Panc1 (cell line): ENCODE measurements at regions of chr1 and their contacts with region 1.

Region 1: GRCh38 chr1:117051224-117052064 is 8.7 kb upstream of the TTF2 start:
- DNase-seq: no peak
- ATAC-seq: peak; percentile 78
- H3K4me3 ChIP-seq: peak overlapping the region; percentile 1 to 7; a peak in 2 of 4 replicates
- H3K27ac ChIP-seq: peak overlapping the region; percentile 63
- H3K4me1 ChIP-seq: no peaks in the 10 kb centered on the region
- H3K27me3 ChIP-seq: no peaks in the 10 kb centered on the region
- CTCF ChIP-seq: no peak

Region 2: GRCh38 chr1:116855191-116855619 is 196.2 kb before region 1 on chr1:
- CTCF ChIA-PET with region 1: interaction called, 7 read pairs
- POLR2A ChIA-PET with region 1: no interaction called
- in situ Hi-C with region 1: no loop called
- intact Hi-C with region 1: loop called (anchors 5 kb)
- DNase-seq: no peak
- ATAC-seq: peak; percentile 43; the same call in 1 of the 2 replicates
- H3K4me3 ChIP-seq: no peak overlapping the region
- H3K27ac ChIP-seq: peak overlapping the region; percentile 44; the same call in 1 of the 2 replicates
- H3K4me1 ChIP-seq: peaks cover 32% of the 10 kb centered on the region
- H3K27me3 ChIP-seq: no peaks in the 10 kb centered on the region
- CTCF ChIP-seq: no peak